ENCODE measurements at regions of chr16 and their contacts with region 1.

Region 1: DNA sequence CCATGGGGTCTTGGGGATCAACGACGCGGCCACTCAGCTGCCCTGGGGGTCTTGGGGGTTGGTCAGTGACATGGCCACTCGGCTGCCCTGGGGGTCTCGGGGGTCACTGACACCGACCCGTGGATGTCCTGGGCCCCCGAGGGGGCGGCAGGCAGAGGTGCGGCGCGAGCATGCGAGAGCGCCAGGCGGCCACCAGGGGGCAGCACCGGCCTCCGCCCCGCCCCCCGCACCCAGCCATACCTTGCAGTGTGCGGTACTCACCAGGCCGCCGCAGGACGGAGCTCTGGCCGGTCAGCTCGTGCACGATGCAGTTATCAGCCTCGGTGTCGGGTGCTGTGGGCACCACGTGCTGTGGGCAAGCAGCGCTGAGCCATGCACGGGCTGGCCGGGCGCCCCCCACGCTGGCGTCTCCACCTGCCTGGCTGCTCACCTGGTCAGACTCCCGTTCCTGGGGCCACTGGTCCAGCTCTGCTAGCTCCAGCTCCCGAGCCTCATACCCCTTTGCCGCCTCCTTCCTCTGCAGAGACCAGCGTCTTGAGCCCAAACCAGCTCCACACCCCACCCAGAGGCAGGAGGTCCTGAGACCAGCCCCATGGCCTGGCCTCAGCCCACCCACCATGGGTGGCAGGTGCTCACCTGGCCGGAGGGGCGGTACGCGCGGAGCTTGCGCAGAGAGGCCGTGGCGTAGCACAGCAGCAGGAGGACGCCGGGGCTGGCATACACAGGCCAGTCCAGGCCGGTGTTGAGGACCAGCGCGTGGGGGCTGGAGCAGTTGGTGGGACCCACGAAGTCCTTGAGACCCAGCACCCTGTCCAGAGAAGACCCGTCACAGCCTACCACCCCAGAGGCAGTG is 31.2 kb downstream of the CTU2 start:
- DNase-seq: peak; percentile 29 to 88
- H3K4me3 ChIP-seq: no peak overlapping the region
- H3K27ac ChIP-seq: no peak overlapping the region
- H3K4me1 ChIP-seq: peaks cover 0 to 5% (median 0%) of the 10 kb centered on the region in 4 experiments; a peak in 1 of 7 replicates
- H3K27me3 ChIP-seq: no peaks in the 10 kb centered on the region
- CTCF ChIP-seq: peak; percentile 86 to 99 (median 91)
- EP300 ChIP-seq: no peak
- POLR2A ChIP-seq: no peak
- RAD21 ChIP-seq: peak; percentile 40 to 66; a peak in 3 of 4 replicates

Region 2: GRCh38 chr16:88580371-88580770 is 157.2 kb before region 1 on chr16:
- CTCF ChIA-PET with region 1: no interaction called
- POLR2A ChIA-PET with region 1: no interaction called
- DNase-seq: no peak
- H3K4me3 ChIP-seq: no peak overlapping the region
- H3K27ac ChIP-seq: no peak overlapping the region
- H3K4me1 ChIP-seq: no peaks in the 10 kb centered on the region
- H3K27me3 ChIP-seq: no peaks in the 10 kb centered on the region
- CTCF ChIP-seq: no peak
- EP300 ChIP-seq: no peak
- POLR2A ChIP-seq: no peak
- RAD21 ChIP-seq: no peak

Region 3: GRCh38 chr16:88713568-88714419 is 23.7 kb before region 1 on chr16:
- CTCF ChIA-PET with region 1: interaction called, 33 read pairs
- POLR2A ChIA-PET with region 1: interaction called, 5 read pairs
- DNase-seq: no peak
- H3K4me3 ChIP-seq: no peak overlapping the region
- H3K27ac ChIP-seq: no peak overlapping the region
- H3K4me1 ChIP-seq: peaks cover 0 to 3% (median 0%) of the 10 kb centered on the region in 4 experiments; a peak in 1 of 7 replicates
- H3K27me3 ChIP-seq: no peaks in the 10 kb centered on the region
- CTCF ChIP-seq: no peak
- EP300 ChIP-seq: no peak
- POLR2A ChIP-seq: no peak
- RAD21 ChIP-seq: no peak

Region 4: GRCh38 chr16:88725609-88726407 is 11.7 kb before region 1 on chr16:
- CTCF ChIA-PET with region 1: interaction called, 24 read pairs
- POLR2A ChIA-PET with region 1: interaction called, 4 read pairs
- DNase-seq: no peak
- H3K4me3 ChIP-seq: no peak overlapping the region
- H3K27ac ChIP-seq: no peak overlapping the region
- H3K4me1 ChIP-seq: no peaks in the 10 kb centered on the region
- H3K27me3 ChIP-seq: no peaks in the 10 kb centered on the region
- CTCF ChIP-seq: no peak
- EP300 ChIP-seq: no peak
- POLR2A ChIP-seq: no peak
- RAD21 ChIP-seq: no peak

Region 5: GRCh38 chr16:88785106-88785924 is 47.8 kb after region 1 on chr16 and contains the start of gene PIEZO1:
- CTCF ChIA-PET with region 1: interaction called, 45 read pairs
- POLR2A ChIA-PET with region 1: no interaction called
- DNase-seq: no peak
- H3K4me3 ChIP-seq: peak within 1 kb of the TSS; percentile 28 to 71 (median 50)
- H3K27ac ChIP-seq: no peak within 1 kb of the TSS
- H3K4me1 ChIP-seq: peaks cover 0 to 8% (median 4%) of the 10 kb centered on the region in 4 experiments; a peak in 5 of 7 replicates
- H3K27me3 ChIP-seq: peaks cover 0 to 6% (median 3%) of the 10 kb centered on the region in 4 experiments; a peak in 3 of 7 replicates
- CTCF ChIP-seq: peak; percentile 49 to 67 (median 55)
- EP300 ChIP-seq: no peak
- POLR2A ChIP-seq: no peak; a peak in 1 of 3 replicates
- RAD21 ChIP-seq: peak; percentile 21 to 54; a peak in 3 of 4 replicates
- total RNA-seq, gene PIEZO1: 63.6 and 67.5 TPM in 2 replicates

Region 6: DNA sequence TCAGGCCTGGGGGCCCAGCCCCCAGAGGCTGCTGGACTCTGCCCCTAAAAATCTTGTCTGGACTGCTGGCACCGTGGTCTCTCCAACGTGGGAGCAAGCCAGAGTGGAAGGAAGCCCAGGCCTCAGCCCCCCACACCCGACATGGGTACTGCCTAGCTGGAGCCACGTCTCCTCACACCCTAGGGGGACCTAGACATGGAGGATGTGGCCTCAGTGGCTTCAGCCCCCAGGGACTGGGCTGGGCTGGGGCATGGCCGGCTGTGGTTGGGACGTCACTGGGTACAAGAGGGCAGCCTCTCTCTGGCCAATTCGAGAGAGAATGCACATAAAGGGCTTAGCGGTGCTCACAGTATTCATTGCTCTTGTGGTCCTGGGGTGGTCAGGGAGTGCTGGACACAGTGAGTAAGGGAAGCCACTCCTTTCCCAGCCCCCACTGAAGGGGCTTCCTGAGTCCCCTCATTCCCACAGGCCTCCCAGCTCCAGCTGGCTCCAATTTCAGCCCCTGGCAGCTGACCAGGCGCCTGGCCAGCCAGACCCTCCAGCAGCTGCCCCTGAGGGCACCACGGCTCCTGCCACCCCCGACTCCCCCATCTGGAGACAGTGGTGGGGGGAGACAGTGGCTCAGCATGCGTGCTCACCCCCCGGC is 435.1 kb after region 1 on chr16:
- CTCF ChIA-PET with region 1: interaction called, 10 read pairs
- POLR2A ChIA-PET with region 1: no interaction called
- DNase-seq: no peak
- H3K4me3 ChIP-seq: no peak overlapping the region
- H3K27ac ChIP-seq: no peak overlapping the region
- H3K4me1 ChIP-seq: peaks cover 0 to 26% (median 17%) of the 10 kb centered on the region in 4 experiments; a peak in 6 of 7 replicates
- H3K27me3 ChIP-seq: peaks cover 0 to 7% (median 4%) of the 10 kb centered on the region in 4 experiments; a peak in 4 of 7 replicates
- CTCF ChIP-seq: no peak
- EP300 ChIP-seq: no peak
- POLR2A ChIP-seq: no peak
- RAD21 ChIP-seq: no peak